ENCODE measurements at regions of chr3 and their contacts with region 1.

Region 1: GRCh38 chr3:30199096-30199759 is 407.2 kb upstream of the TGFBR2 start:
- DNase-seq: peak; percentile 71
- H3K4me3 Mint-ChIP-seq: no peak overlapping the region
- H3K27ac Mint-ChIP-seq: no peak overlapping the region
- H3K4me1 Mint-ChIP-seq: no peaks in the 10 kb centered on the region
- H3K27me3 Mint-ChIP-seq: no peaks in the 10 kb centered on the region

Region 2: GRCh38 chr3:30012941-30013543 is 186.2 kb before region 1 on chr3:
- CTCF ChIA-PET with region 1: interaction called, 36 read pairs
- POLR2A ChIA-PET with region 1: no interaction called
- DNase-seq: peak; percentile 47
- H3K4me3 Mint-ChIP-seq: no peak overlapping the region
- H3K27ac Mint-ChIP-seq: no peak overlapping the region
- H3K4me1 Mint-ChIP-seq: no peaks in the 10 kb centered on the region
- H3K27me3 Mint-ChIP-seq: peaks cover 2% of the 10 kb centered on the region

Region 3: GRCh38 chr3:30042274-30042859 is 156.9 kb before region 1 on chr3:
- CTCF ChIA-PET with region 1: interaction called, 32 read pairs
- POLR2A ChIA-PET with region 1: no interaction called
- DNase-seq: peak; percentile 57
- H3K4me3 Mint-ChIP-seq: no peak overlapping the region
- H3K27ac Mint-ChIP-seq: no peak overlapping the region
- H3K4me1 Mint-ChIP-seq: no peaks in the 10 kb centered on the region
- H3K27me3 Mint-ChIP-seq: peaks cover 23% of the 10 kb centered on the region

Region 4: DNA sequence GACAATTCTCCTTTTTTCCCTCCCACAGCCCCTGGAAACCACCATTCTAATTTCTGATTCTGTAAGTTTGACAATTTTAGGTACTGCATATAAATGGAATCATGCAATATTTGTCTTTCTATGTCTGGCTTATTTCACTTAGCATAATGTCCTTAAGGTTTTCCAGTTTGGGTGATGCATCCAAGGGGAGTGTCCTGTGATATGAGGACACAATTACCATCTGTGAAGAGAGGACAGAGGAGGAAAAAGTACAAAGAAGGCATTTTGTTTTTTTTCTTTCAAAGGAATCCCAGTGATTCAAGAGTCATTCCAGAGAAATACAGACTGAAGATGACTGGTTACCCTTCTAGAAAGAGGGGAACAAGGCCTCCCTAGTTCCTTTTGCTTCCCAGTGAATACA is 107.5 kb before region 1 on chr3:
- CTCF ChIA-PET with region 1: no interaction called
- POLR2A ChIA-PET with region 1: no interaction called
- DNase-seq: no peak
- H3K4me3 Mint-ChIP-seq: no peak overlapping the region
- H3K27ac Mint-ChIP-seq: no peak overlapping the region
- H3K4me1 Mint-ChIP-seq: no peaks in the 10 kb centered on the region
- H3K27me3 Mint-ChIP-seq: peaks cover 1% of the 10 kb centered on the region

Region 5: GRCh38 chr3:30112902-30113484 is 86.2 kb before region 1 on chr3:
- CTCF ChIA-PET with region 1: interaction called, 14 read pairs
- POLR2A ChIA-PET with region 1: no interaction called
- DNase-seq: no peak
- H3K4me3 Mint-ChIP-seq: no peak overlapping the region
- H3K27ac Mint-ChIP-seq: no peak overlapping the region
- H3K4me1 Mint-ChIP-seq: no peaks in the 10 kb centered on the region
- H3K27me3 Mint-ChIP-seq: peaks cover 5% of the 10 kb centered on the region